ENCODE measurements at regions of chr2 and their contacts with region 1.

Region 1: GRCh38 chr2:181104512-181105115 is 124.2 kb downstream of the UBE2E3 start:
- DNase-seq: peak; percentile 57
- H3K4me3 ChIP-seq: no peak overlapping the region
- H3K27ac ChIP-seq: no peak overlapping the region
- H3K4me1 ChIP-seq: peaks cover 12% of the 10 kb centered on the region
- H3K27me3 ChIP-seq: no peaks in the 10 kb centered on the region
- CTCF ChIP-seq: peak; percentile 35 to 41
- POLR2A ChIP-seq: no peak

Region 2: GRCh38 chr2:181085734-181086133 is 18.9 kb before region 1 on chr2:
- CTCF ChIA-PET with region 1: interaction called, 10 read pairs
- POLR2A ChIA-PET with region 1: no interaction called
- dilution Hi-C with region 1: no loop called
- intact Hi-C with region 1: no loop called
- DNase-seq: no peak
- H3K4me3 ChIP-seq: no peak overlapping the region
- H3K27ac ChIP-seq: no peak overlapping the region
- H3K4me1 ChIP-seq: no peaks in the 10 kb centered on the region
- H3K27me3 ChIP-seq: no peaks in the 10 kb centered on the region
- CTCF ChIP-seq: no peak
- POLR2A ChIP-seq: no peak

Region 3: GRCh38 chr2:181374781-181375675 is 270.4 kb after region 1 on chr2:
- CTCF ChIA-PET with region 1: no interaction called
- POLR2A ChIA-PET with region 1: no interaction called
- dilution Hi-C with region 1: no loop called
- intact Hi-C with region 1: loop called (anchors 10 kb)
- DNase-seq: no peak
- H3K4me3 ChIP-seq: no peak overlapping the region
- H3K27ac ChIP-seq: no peak overlapping the region
- H3K4me1 ChIP-seq: peaks cover 2% of the 10 kb centered on the region
- H3K27me3 ChIP-seq: peaks cover 0 to 2% of the 10 kb centered on the region in 2 experiments
- CTCF ChIP-seq: no peak
- POLR2A ChIP-seq: no peak

Region 4: GRCh38 chr2:181457121-181457740 is 352.6 kb after region 1 on chr2 and contains the start of gene ITGA4:
- CTCF ChIA-PET with region 1: interaction called, 8 read pairs
- POLR2A ChIA-PET with region 1: no interaction called
- dilution Hi-C with region 1: no loop called
- intact Hi-C with region 1: loop called (anchors 1 kb)
- DNase-seq: peak; percentile 47
- H3K4me3 ChIP-seq: peak within 1 kb of the TSS; percentile 5 to 43 (median 41)
- H3K27ac ChIP-seq: no peak within 1 kb of the TSS
- H3K4me1 ChIP-seq: peaks cover 7% of the 10 kb centered on the region
- H3K27me3 ChIP-seq: peaks cover 15 to 53% of the 10 kb centered on the region in 2 experiments
- CTCF ChIP-seq: peak; percentile 65 to 76
- POLR2A ChIP-seq: no peak
- total RNA-seq, gene ITGA4: 2.8 TPM in 2 replicates

Region 5: DNA sequence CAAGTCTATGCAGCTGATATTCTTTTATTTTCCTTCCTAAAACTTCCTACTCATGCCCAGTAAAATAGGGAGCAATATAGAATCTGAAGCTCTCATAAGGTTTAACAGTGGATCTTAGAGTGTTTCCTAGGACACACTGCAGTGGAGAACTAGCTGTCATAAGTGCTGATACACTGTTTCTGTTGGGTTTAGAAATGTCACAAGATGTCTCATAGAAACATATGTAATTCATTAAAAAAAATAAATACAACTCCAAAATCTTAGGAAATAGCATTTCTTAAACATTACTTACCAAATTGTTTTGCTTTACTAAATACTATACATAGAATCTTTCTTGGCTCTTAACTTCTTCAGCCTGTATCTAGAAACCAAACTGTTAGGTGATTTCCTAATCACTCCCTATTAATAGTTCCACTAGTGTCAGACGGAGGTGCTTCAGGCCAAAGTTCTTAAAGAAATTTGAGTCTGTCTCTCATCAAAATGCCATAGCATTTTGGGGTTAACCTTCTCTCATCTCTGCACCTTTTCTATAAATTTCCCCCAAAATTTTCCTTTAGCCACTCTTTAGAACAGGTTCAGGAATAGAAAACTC is 458.6 kb after region 1 on chr2:
- CTCF ChIA-PET with region 1: no interaction called
- POLR2A ChIA-PET with region 1: no interaction called
- dilution Hi-C with region 1: no loop called
- intact Hi-C with region 1: loop called (anchors 10 kb)
- DNase-seq: no peak
- H3K4me3 ChIP-seq: no peak overlapping the region
- H3K27ac ChIP-seq: no peak overlapping the region
- H3K4me1 ChIP-seq: no peaks in the 10 kb centered on the region
- H3K27me3 ChIP-seq: no peaks in the 10 kb centered on the region
- CTCF ChIP-seq: no peak
- POLR2A ChIP-seq: no peak